IMR-90 (cell line): ENCODE measurements at regions of chr15 and their contacts with region 1.

Region 1: GRCh38 chr15:40873625-40874561 is at the start of gene RHOV:
- DNase-seq: peak; percentile 29
- ATAC-seq: peak; percentile 92
- H3K4me3 ChIP-seq: peak within 1 kb of the TSS; percentile 62
- H3K27ac ChIP-seq: no peak within 1 kb of the TSS
- H3K4me1 ChIP-seq: no peaks in the 10 kb centered on the region
- H3K27me3 ChIP-seq: peaks cover 25% of the 10 kb centered on the region
- CTCF ChIP-seq: peak; percentile 40
- POLR2A ChIP-seq: no peak
- RAD21 ChIP-seq: no peak; the same call in 1 of the 2 replicates
- total RNA-seq, gene RHOV: not detected in 2 replicates

Region 2: DNA sequence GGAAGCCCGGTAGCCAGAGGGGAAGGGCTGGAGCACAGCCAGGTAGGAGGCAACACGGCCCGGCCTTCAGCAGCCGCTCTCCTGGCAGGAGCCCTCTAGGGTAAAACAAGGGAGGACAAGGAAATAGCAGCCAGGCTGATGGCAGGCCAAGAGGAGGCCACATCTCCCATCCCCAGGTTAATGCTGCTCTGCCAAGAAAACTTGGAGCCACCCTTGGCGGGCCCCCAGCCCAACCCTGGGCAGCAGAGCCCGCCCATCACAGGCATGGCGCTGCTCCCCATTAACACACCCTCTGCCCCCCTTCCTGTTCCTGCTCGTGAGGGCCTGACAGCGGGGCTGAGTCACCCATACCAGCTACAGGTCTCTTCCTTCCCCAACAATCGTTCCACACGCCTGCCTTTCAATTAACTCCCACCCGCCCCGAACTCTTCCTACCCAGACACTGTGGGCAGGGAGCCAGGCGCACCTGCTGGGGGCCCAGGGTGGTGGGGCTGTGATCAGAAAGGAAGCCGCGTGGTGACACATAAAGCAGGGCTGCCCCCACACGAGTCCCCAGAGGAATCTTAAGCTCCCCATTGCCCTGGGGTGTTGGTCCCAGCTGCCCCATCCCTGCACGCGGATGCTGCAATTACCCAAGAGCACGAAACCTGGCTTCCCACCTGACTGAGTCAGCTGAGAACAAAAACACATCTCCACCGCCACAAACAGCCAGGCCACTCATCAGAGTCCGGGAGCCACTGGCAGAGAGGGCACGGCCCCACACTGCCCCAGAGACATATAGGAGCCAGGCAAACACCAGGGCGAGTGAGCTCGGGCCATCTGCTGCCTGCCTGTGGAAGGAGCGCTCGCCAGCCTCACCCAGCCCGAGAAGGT is 104.4 kb before region 1 on chr15 and contains the start of gene C15orf62:
- CTCF ChIA-PET with region 1: no interaction called
- POLR2A ChIA-PET with region 1: no interaction called
- dilution Hi-C with region 1: no loop called
- in situ Hi-C with region 1: no loop called
- intact Hi-C with region 1: no loop called
- DNase-seq: peak; percentile 31
- ATAC-seq: no peak
- H3K4me3 ChIP-seq: no peak within 1 kb of the TSS
- H3K27ac ChIP-seq: no peak within 1 kb of the TSS
- H3K4me1 ChIP-seq: peaks cover 18% of the 10 kb centered on the region
- H3K27me3 ChIP-seq: no peaks in the 10 kb centered on the region
- CTCF ChIP-seq: no peak
- POLR2A ChIP-seq: no peak
- RAD21 ChIP-seq: no peak
- total RNA-seq, gene C15orf62: under 0.01 TPM in 1 of 2 replicates, not detected in the other

Region 3: DNA sequence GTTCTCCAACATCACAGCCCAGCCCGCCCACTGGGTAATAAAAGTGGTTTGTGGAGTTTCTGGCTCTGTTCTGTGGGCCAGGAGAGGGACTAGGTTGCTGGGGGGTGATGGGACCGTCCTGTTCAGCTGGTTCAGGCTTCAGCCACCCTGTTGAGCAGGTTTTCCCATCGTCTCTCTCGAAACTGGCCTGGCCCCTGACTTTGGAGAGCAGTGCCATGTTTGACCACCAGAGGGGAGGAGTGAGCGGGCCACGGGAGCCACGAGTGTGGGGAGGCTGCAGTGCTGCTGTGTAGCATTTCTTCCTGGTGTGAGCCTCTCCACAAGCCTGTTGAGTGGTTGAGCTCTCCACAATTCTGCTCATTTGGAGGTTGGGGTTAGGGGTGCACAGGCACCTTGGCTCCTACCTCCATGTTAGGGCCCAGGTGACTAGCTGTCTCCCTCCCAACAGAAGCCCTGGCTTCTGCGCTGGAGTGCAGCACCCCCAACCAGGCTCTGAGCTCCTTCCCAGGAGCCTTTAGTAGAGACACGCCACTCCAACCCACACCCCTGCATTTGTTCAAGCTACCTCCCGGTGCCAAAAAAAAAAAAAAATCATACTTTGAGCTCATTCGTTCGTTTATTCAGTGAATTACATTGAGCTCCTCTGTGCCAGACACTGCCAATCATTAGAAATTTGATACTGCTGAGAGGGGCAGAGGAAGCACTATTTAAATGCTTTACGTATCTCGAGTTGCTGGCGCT is 16.1 kb before region 1 on chr15:
- CTCF ChIA-PET with region 1: interaction called, 15 read pairs
- POLR2A ChIA-PET with region 1: no interaction called
- dilution Hi-C with region 1: no loop called
- in situ Hi-C with region 1: no loop called
- intact Hi-C with region 1: no loop called
- DNase-seq: peak; percentile 48
- ATAC-seq: peak; percentile 99
- H3K4me3 ChIP-seq: no peak overlapping the region
- H3K27ac ChIP-seq: no peak overlapping the region
- H3K4me1 ChIP-seq: no peaks in the 10 kb centered on the region
- H3K27me3 ChIP-seq: peaks cover 7% of the 10 kb centered on the region
- CTCF ChIP-seq: peak; percentile 91
- POLR2A ChIP-seq: no peak
- RAD21 ChIP-seq: peak; percentile 77